Adrenal gland (tissue), 19 donors: ENCODE measurements at regions of chr15 and their contacts with region 1.

Region 1: GRCh38 chr15:34841262-34841725 is 45.9 kb upstream of the ACTC1 start:
- DNase-seq: no peak
- H3K4me3 ChIP-seq: no peak overlapping the region
- H3K27ac ChIP-seq: no peak overlapping the region
- H3K4me1 ChIP-seq: no peaks in the 10 kb centered on the region
- H3K27me3 ChIP-seq: no peaks in the 10 kb centered on the region
- CTCF ChIP-seq: no peak
- POLR2A ChIP-seq: no peak

Region 2: GRCh38 chr15:34721802-34722795 is 119.2 kb before region 1 on chr15:
- intact Hi-C with region 1: loop called in 1 of 2 experiments (anchors 10 kb)
- DNase-seq: peak; percentile 18 to 78 (median 27)
- H3K4me3 ChIP-seq: peak overlapping the region in 1 of 4 donors; percentile 19
- H3K27ac ChIP-seq: peak overlapping the region in 2 of 5 donors; percentile 46 to 72
- H3K4me1 ChIP-seq: peaks cover 0 to 11% of the 10 kb centered on the region in 2 donors
- H3K27me3 ChIP-seq: no peaks in the 10 kb centered on the region
- CTCF ChIP-seq: peak in 1 of 6 experiments; percentile 8
- POLR2A ChIP-seq: no peak

Region 3: DNA sequence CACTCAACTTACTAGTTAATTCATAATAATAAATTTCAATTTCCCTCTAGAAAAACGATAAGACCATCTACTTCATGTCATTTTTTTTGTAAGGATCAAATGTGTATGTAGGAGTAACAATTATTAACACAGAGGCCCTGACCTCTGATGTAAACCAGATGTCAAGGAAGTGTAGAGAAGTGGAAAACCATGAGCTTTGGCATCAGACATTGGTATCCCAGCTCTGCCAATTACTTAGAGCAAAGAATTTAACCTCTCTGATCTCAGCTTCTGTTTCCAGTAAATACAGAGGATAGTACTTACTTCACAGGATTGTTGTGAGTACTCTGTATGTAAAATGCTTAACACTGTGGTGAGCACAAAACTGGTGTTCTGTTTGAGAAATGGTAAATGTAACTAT is 110.7 kb after region 1 on chr15:
- intact Hi-C with region 1: no loop called
- DNase-seq: no peak
- H3K4me3 ChIP-seq: no peak overlapping the region
- H3K27ac ChIP-seq: no peak overlapping the region
- H3K4me1 ChIP-seq: no peaks in the 10 kb centered on the region
- H3K27me3 ChIP-seq: no peaks in the 10 kb centered on the region
- CTCF ChIP-seq: no peak
- POLR2A ChIP-seq: no peak